ENCODE measurements at regions of chr6 and their contacts with region 1.

Region 1: DNA sequence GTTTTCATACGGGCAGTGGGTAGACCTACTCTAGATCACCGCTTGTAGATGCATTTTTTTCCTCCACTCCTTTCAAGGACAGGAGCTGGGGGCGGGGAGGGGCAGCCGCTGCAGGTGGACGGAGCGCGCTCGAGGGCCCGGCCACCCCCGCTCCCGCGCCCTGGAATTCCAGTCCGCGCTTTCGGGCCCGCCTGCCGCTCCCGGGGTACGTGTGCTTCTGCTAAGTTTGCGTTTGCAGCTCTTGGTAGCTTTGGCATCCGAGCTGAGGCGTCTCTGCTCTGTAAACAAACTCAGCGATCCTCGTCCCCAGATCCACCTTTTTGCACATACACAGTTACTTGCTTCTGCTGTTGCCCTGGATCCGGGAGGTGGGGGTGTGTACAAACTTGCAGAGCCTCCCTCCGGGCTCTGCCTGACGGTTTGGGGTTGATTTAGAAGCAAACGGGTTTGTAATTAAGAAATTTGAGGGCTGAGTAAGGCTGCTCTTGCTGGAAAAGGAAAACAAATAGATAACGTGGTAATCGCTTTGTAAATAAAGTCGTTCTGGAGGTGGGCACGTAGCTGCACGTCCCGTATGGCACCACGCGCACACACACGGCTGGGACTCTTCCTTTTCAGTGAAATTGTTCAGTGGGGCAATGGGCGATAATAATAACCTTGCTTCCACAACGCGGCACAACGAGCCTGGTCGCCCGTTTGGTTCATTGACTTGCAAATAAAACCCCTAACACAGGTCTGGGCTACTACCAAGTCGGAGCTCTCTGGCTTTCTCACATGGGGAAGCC is 976 bp upstream of the CITED2 start:
- DNase-seq: peak; percentile 86
- H3K4me3 Mint-ChIP-seq: peak overlapping the region; percentile 99
- H3K27ac Mint-ChIP-seq: peak overlapping the region; percentile 90
- H3K4me1 Mint-ChIP-seq: peaks cover 45% of the 10 kb centered on the region
- H3K27me3 Mint-ChIP-seq: no peaks in the 10 kb centered on the region

Region 2: DNA sequence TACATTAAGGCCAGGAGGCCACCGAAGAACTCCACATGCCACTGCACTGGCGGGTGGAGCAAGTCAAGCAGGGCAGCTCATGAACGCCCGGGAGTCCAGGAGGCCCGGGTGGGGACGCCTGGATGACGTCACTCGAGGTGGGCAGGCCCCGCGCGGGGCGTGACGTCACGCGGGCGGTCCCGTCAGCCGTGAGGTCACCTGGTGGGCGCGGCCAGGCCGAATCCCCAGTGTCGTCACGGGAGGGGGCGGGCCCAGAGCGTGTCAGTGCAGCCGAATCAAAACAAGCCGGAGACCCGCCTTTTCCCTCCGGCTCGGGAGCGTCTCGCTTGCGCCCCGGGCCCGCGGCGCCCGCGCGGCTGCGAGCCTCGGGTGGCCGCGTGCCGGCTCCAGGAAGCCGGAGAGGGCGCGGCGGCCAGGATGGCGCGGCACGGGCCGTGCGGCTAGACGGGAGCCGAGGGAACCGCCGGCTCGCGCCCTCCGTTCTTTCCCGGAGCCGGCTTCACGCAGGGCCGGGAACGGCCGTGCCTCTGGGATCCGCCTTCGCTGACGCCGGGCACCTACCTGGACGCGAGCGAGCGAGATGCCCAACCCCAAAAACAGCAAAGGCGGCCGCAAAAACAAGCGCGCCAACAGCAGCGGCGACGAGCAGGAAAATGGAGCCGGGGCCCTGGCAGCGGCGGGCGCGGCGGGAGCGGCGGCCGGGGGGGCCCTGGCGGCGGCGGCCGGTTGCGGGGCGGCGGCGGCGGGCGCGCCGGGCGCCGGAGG is 240.4 kb before region 1 on chr6 and contains the start of gene HECA:
- CTCF ChIA-PET with region 1: interaction called, 5 read pairs
- POLR2A ChIA-PET with region 1: interaction called, 36 read pairs
- DNase-seq: peak; percentile 99
- H3K4me3 Mint-ChIP-seq: peak within 1 kb of the TSS; percentile 82
- H3K27ac Mint-ChIP-seq: peak within 1 kb of the TSS; percentile 96
- H3K4me1 Mint-ChIP-seq: peaks cover 57% of the 10 kb centered on the region
- H3K27me3 Mint-ChIP-seq: no peaks in the 10 kb centered on the region
- total RNA-seq, gene HECA: 78.9 to 81.7 TPM

Region 3: GRCh38 chr6:139219271-139219729 is 156.1 kb before region 1 on chr6:
- CTCF ChIA-PET with region 1: interaction called, 94 read pairs
- POLR2A ChIA-PET with region 1: interaction called, 16 read pairs
- DNase-seq: peak; percentile 83
- H3K4me3 Mint-ChIP-seq: no peak overlapping the region
- H3K27ac Mint-ChIP-seq: peak overlapping the region; percentile 59
- H3K4me1 Mint-ChIP-seq: peaks cover 13% of the 10 kb centered on the region
- H3K27me3 Mint-ChIP-seq: no peaks in the 10 kb centered on the region

Region 4: GRCh38 chr6:139291813-139292619 is 83.4 kb before region 1 on chr6 and contains the start of gene TXLNB:
- CTCF ChIA-PET with region 1: interaction called, 5 read pairs
- POLR2A ChIA-PET with region 1: interaction called, 65 read pairs
- DNase-seq: peak; percentile 89
- H3K4me3 Mint-ChIP-seq: peak within 1 kb of the TSS; percentile 74
- H3K27ac Mint-ChIP-seq: peak within 1 kb of the TSS; percentile 96
- H3K4me1 Mint-ChIP-seq: peaks cover 32% of the 10 kb centered on the region
- H3K27me3 Mint-ChIP-seq: no peaks in the 10 kb centered on the region
- total RNA-seq, gene TXLNB: 0.60 to 0.90 TPM

Region 5: GRCh38 chr6:139443231-139444130 is 68.1 kb after region 1 on chr6:
- CTCF ChIA-PET with region 1: interaction called, 3 read pairs
- POLR2A ChIA-PET with region 1: interaction called, 20 read pairs
- DNase-seq: no peak
- H3K4me3 Mint-ChIP-seq: no peak overlapping the region
- H3K27ac Mint-ChIP-seq: no peak overlapping the region
- H3K4me1 Mint-ChIP-seq: peaks cover 42% of the 10 kb centered on the region
- H3K27me3 Mint-ChIP-seq: no peaks in the 10 kb centered on the region

Region 6: DNA sequence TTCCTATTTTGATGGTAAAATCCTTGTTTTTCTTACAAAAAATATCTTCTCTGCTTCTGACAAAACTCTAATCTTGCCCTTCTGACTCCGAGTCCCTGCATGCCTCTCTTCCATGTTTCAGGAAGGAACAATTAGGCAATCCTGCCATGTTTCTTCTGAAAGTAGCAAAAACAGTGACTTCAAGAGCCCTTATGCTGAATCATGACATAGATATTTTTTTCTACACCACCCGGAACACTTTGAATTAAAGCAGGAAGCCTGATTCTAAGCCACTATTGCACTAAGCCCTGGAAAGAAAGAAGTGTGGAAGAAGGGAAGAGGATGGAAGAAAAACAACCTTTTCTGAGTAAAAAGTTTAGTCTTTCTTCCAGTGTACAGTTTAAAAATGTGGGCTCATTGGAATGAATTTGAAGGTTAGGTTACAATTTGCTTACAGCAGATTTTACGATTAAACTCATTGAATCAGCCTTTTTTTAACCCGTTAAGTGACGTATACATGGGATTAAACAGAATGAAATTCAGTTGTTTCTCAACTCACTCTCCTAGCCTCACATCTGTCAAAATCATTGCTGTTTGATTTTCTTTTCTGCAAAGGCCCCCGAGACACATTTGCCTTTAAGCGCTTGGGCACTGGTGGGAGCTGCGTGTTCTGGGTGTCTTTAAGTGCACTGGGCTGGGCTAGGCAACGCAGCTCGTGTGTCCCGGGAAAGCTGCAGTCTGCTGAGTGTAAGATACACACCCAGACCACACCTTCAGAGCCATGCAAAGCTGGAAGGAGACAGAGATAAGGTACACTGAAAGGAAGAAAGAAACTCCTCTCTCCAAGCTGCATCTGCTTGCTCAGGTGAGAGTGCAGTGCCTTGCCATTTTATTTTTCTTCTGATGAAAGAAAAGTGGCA is 158.4 kb after region 1 on chr6:
- CTCF ChIA-PET with region 1: interaction called, 30 read pairs
- POLR2A ChIA-PET with region 1: interaction called, 101 read pairs
- DNase-seq: peak; percentile 19
- H3K4me3 Mint-ChIP-seq: peak overlapping the region; percentile 17
- H3K27ac Mint-ChIP-seq: peak overlapping the region; percentile 99
- H3K4me1 Mint-ChIP-seq: peaks cover 74% of the 10 kb centered on the region
- H3K27me3 Mint-ChIP-seq: no peaks in the 10 kb centered on the region

Region 7: GRCh38 chr6:139888681-139889122 is 513.3 kb after region 1 on chr6:
- CTCF ChIA-PET with region 1: interaction called, 12 read pairs
- POLR2A ChIA-PET with region 1: interaction called, 6 read pairs
- DNase-seq: no peak
- H3K4me3 Mint-ChIP-seq: no peak overlapping the region
- H3K27ac Mint-ChIP-seq: no peak overlapping the region
- H3K4me1 Mint-ChIP-seq: peaks cover 13% of the 10 kb centered on the region
- H3K27me3 Mint-ChIP-seq: peaks cover 4% of the 10 kb centered on the region

Measured in activated CD4-positive, alpha-beta memory T cell treated with anti-CD3 and anti-CD28 coated beads, Interleukin-2, amount 10 ng/mL, durations not matched to agents 7 days and 5 days (primary cell).